ENCODE measurements at regions of chrX and their contacts with region 1.

Region 1: GRCh38 chrX:76893930-76894329 is 466.4 kb downstream of the MAGEE1 start:
- DNase-seq: peak; percentile 12
- ATAC-seq: peak; percentile 37; the same call in 1 of the 2 replicates
- H3K4me3 ChIP-seq: no peak overlapping the region
- H3K27ac ChIP-seq: no peak overlapping the region
- H3K4me1 ChIP-seq: no peaks in the 10 kb centered on the region
- H3K27me3 ChIP-seq: no peaks in the 10 kb centered on the region
- CTCF ChIP-seq: peak; percentile 35; the same call in 1 of the 2 replicates

Region 2: GRCh38 chrX:77415161-77415560 is 521.2 kb after region 1 on chrX:
- CTCF ChIA-PET with region 1: no interaction called
- POLR2A ChIA-PET with region 1: no interaction called
- intact Hi-C with region 1: loop called (anchors 2 kb)
- DNase-seq: peak; percentile 44
- ATAC-seq: peak; percentile 80
- H3K4me3 ChIP-seq: no peak overlapping the region
- H3K27ac ChIP-seq: no peak overlapping the region
- H3K4me1 ChIP-seq: peaks cover 9% of the 10 kb centered on the region
- H3K27me3 ChIP-seq: no peaks in the 10 kb centered on the region
- CTCF ChIP-seq: peak; percentile 66

Region 3: DNA sequence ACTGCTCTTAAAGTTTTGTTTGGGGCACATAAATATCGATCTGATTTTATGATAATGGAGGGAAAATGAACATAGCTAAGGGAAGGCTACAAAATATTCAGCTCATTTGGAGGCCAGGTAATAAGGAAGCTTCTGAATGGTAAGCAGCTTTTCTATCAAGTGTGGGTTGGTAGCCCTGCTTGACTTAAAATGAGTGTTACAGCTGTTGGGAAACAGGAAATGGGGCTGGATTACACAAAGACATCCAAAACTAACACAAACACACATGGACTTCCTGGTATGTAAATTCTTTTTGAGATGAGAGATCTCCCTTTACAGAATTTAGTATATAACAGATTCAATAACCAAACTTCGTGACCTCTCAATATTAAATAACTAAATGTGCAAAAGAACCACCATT is 611.3 kb after region 1 on chrX:
- CTCF ChIA-PET with region 1: no interaction called
- POLR2A ChIA-PET with region 1: no interaction called
- intact Hi-C with region 1: loop called (anchors 10 kb)
- DNase-seq: no peak
- ATAC-seq: no peak
- H3K4me3 ChIP-seq: no peak overlapping the region
- H3K27ac ChIP-seq: no peak overlapping the region
- H3K4me1 ChIP-seq: 0 out of 2 replicates have a peak, but pooled peaks cover 2% of the 10 kb centered on the region
- H3K27me3 ChIP-seq: no peaks in the 10 kb centered on the region
- CTCF ChIP-seq: no peak

Region 4: DNA sequence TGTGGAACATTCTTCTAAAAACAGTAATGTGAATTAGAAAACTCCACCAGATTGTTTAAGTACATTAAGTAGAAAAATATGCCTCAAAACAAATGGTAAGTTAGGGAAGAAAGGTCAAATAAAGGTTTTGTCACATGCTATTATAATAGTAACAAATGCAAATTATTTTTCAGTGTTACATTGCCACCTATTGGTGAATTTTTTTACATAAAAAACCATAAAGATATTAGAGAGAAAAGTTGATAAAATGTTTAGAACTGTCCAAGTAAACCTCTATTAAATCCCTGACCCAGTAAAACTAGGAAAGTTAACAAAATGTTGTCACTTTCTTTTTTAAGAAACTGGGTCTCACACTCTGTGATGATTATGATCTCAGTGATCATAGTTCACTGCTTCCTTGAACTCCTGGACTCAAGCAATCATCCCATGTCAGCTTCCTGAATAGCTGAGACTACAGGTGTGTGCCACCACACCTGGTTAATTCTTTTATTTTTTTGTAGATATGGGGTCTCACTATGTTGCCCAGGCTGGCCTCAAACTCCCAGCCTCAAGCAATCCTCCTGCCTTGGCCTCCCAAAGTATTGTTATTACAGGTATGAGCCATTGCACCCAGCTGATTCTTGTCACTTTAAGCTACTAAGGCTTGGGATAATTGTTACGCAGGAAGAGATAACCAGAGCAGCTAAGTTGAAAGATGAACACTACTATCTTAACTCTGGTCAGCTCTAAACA is 734.5 kb after region 1 on chrX:
- CTCF ChIA-PET with region 1: no interaction called
- POLR2A ChIA-PET with region 1: no interaction called
- intact Hi-C with region 1: loop called (anchors 10 kb)
- DNase-seq: peak; percentile 40
- ATAC-seq: no peak
- H3K4me3 ChIP-seq: no peak overlapping the region
- H3K27ac ChIP-seq: no peak overlapping the region
- H3K4me1 ChIP-seq: no peaks in the 10 kb centered on the region
- H3K27me3 ChIP-seq: no peaks in the 10 kb centered on the region
- CTCF ChIP-seq: peak; percentile 57

Measured in PC-3 (cell line).